Dorsolateral prefrontal cortex (tissue), 120 donors: ENCODE measurements at regions of chr4 and their contacts with region 1.

Region 1: DNA sequence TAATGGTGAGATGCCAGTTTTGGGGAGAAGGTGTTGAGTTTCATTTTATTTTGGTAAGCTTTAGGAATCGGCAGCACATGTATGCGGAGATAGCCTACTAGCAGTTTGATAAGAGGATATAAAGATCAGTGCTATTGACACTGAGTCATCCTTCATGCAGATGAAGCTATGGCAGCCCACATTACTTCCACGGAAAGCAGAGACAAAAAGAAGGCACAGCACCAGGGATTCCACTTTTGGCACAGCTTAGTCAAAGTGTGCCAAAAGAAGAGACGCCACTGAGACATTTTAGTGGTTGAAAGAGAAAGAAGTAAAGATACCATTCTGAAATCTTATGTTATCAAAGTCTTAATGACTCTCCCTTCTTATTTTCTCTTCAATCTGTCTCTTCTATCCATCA is 103.8 kb downstream of the GABRB1 start:
- DNase-seq: peak in 1 of 10 donors; percentile 28
- H3K4me3 ChIP-seq: peak overlapping the region in 1 of 59 donors; percentile 9
- H3K27ac ChIP-seq: peak overlapping the region in 8 of 59 donors; percentile 11 to 68 (median 19)
- H3K27me3 ChIP-seq: no peaks in the 10 kb centered on the region
- CTCF ChIP-seq: no peak

Region 2: GRCh38 chr4:46730075-46730474 is 405.1 kb before region 1 on chr4:
- intact Hi-C with region 1: no loop called
- DNase-seq: no peak
- H3K4me3 ChIP-seq: no peak overlapping the region
- H3K27ac ChIP-seq: no peak overlapping the region
- H3K27me3 ChIP-seq: peaks cover 0 to 5% (median 0%) of the 10 kb centered on the region in 45 donors
- CTCF ChIP-seq: no peak

Region 3: GRCh38 chr4:47209833-47210232 is 74.6 kb after region 1 on chr4:
- intact Hi-C with region 1: loop called in 1 of 2 experiments (anchors 10 kb)
- DNase-seq: no peak
- H3K4me3 ChIP-seq: no peak overlapping the region
- H3K27ac ChIP-seq: no peak overlapping the region
- H3K27me3 ChIP-seq: no peaks in the 10 kb centered on the region
- CTCF ChIP-seq: no peak